Esophagus squamous epithelium (tissue), 5 donors: ENCODE measurements at regions of chr17 and their contacts with region 1.

Region 1: GRCh38 chr17:45889579-45889978 is 4.8 kb upstream of the MAPT start:
- DNase-seq: no peak
- H3K4me3 ChIP-seq: no peak overlapping the region
- H3K27ac ChIP-seq: no peak overlapping the region
- H3K4me1 ChIP-seq: peaks cover 0 to 9% (median under 1%) of the 10 kb centered on the region in 3 donors
- H3K27me3 ChIP-seq: peaks cover 0 to 12% (median 0%) of the 10 kb centered on the region in 4 donors
- CTCF ChIP-seq: no peak
- POLR2A ChIP-seq: no peak

Region 2: DNA sequence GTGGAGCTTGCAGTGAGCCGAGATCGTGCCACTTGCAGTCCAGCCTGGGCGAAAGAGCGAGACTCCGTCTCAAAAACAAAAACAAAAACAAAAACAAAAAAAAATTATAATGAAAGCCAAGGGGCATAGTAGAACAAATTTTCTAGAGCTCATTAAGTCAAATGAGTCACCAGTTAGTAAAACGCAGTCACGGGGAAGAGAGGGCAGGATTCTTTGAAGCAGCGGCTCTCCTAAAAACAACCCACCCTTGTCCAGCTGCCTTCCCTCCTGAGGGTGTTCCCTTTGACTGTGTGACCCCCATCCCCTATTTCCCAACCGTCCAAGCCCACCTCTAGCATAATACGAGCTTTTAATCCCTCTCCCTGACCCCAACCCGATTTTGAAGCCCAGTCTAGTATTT is 65.3 kb after region 1 on chr17:
- intact Hi-C with region 1: loop called (anchors 10 kb)
- DNase-seq: no peak
- H3K4me3 ChIP-seq: no peak overlapping the region
- H3K27ac ChIP-seq: no peak overlapping the region
- H3K4me1 ChIP-seq: peaks cover 0 to 25% (median 0%) of the 10 kb centered on the region in 3 donors
- H3K27me3 ChIP-seq: peaks cover 0 to 18% (median 0%) of the 10 kb centered on the region in 4 donors
- CTCF ChIP-seq: no peak
- POLR2A ChIP-seq: no peak